Prostate gland (tissue), 2 donors: ENCODE measurements at regions of chr17 and their contacts with region 1.

Region 1: GRCh38 chr17:34361478-34362061 is 1.5 kb downstream of the CCL1 start:
- DNase-seq: peak; percentile 90
- H3K4me3 ChIP-seq: no peak overlapping the region
- H3K27ac ChIP-seq: no peak overlapping the region
- H3K4me1 ChIP-seq: no peaks in the 10 kb centered on the region
- H3K27me3 ChIP-seq: peaks cover 4% of the 10 kb centered on the region
- CTCF ChIP-seq: peak; percentile 92 to 100 (median 98)
- POLR2A ChIP-seq: no peak

Region 2: DNA sequence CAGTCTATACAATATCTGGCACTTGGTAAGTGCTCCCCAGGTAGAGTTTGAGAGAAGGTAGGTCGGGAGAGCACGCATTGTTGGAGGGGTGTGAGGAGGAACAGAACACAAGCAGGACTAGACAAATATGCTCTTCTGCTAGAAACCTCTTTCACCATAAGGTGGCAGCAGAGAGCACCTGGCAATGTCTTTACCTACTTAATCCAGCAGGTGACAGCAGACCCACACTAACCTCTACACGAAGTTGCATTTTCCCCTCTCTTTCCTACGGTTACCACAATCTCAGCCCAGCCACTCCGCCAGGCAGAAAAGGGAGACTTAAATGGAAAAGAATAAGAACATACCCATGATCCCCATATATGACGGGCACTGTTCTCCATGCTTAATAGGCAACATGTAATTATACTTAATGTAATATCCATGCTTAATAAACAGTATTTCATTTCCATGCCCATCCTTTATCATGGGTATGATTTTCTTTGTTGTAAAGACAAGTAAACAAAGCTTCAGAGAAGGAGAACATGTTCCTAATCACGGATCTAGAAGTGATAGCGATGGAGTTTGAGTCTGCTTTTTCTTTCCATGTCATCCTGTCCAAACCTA is 161.5 kb before region 1 on chr17:
- intact Hi-C with region 1: loop called (anchors 1 kb)
- DNase-seq: peak; percentile 83
- H3K4me3 ChIP-seq: no peak overlapping the region
- H3K27ac ChIP-seq: no peak overlapping the region
- H3K4me1 ChIP-seq: no peaks in the 10 kb centered on the region
- H3K27me3 ChIP-seq: no peaks in the 10 kb centered on the region
- CTCF ChIP-seq: peak; percentile 100
- POLR2A ChIP-seq: no peak

Region 3: DNA sequence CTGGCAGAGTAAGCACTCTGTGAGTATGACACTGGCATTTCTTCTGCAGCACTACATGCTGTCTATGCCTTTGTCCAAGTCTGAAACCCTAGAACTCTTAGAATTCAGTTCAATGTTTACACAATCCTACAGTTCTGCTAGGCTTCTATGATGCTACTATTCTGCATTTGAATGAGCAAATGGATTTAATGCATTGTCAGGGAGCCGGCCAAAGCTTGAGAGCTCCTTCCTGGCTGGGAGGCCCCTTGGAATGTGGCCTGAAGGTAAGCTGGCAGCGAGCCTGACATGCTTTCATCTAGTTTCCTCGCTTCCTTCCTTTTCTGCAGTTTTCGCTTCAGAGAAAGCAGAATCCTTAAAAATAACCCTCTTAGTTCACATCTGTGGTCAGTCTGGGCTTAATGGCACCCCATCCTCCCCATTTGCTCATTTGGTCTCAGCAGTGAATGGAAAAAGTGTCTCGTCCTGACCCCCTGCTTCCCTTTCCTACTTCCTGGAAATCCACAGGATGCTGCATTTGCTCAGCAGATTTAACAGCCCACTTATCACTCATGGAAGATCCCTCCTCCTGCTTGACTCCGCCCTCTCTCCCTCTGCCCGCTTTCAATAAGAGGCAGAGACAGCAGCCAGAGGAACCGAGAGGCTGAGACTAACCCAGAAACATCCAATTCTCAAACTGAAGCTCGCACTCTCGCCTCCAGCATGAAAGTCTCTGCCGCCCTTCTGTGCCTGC is 106.8 kb before region 1 on chr17 and contains the start of gene CCL2:
- intact Hi-C with region 1: loop called (anchors 10 kb)
- DNase-seq: peak; percentile 73
- H3K4me3 ChIP-seq: peak within 1 kb of the TSS; percentile 19 to 25
- H3K27ac ChIP-seq: peak within 1 kb of the TSS; percentile 69 to 73
- H3K4me1 ChIP-seq: peaks cover 13% of the 10 kb centered on the region
- H3K27me3 ChIP-seq: no peaks in the 10 kb centered on the region
- CTCF ChIP-seq: no peak
- POLR2A ChIP-seq: peak; percentile 44
- total RNA-seq, gene CCL2: 30.2 to 41.8 TPM